Panc1 (cell line): ENCODE measurements at regions of chr2 and their contacts with region 1.

Region 1: DNA sequence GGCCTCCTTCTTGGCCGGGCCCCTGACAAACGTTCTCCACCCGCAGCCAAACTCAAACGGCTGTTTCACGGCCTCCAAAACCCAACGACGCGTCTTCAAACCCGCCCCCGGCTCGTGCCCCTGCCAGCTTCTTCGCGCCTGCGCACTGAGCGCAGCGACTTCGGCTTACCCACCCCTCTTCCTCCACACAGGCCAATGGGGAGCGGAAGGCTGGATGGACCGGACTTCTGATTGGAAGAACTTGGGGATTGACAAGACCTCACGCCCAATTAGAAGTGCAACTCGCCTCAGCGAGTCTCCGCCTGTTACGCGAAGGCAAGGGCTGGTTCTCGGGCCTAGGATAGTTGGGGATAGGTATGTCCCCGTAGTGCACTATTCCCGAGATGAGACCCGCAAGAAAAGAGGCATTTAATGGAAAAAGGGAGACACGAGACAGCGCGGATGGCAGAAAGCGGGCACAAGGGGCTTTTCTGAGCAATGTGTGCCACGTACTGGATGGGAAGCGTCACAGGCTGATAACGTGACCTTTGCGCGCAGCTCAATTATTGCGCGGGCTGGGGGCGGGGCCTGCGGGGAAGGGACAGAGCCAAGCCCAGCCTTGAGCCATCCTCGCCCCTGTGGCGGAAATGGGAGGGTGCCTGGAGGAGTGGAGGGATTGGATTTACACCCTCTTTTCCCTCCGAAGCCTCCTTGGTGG is at the start of gene LAPTM4A:
- DNase-seq: peak; percentile 99
- ATAC-seq: peak; percentile 98
- H3K4me3 ChIP-seq: peak within 1 kb of the TSS; percentile 98
- H3K27ac ChIP-seq: peak within 1 kb of the TSS; percentile 99
- H3K4me1 ChIP-seq: peaks cover 23% of the 10 kb centered on the region
- H3K27me3 ChIP-seq: 0 out of 2 replicates have a peak, but pooled peaks cover 3% of the 10 kb centered on the region
- CTCF ChIP-seq: no peak
- total RNA-seq, gene LAPTM4A: 123 TPM

Region 2: GRCh38 chr2:20037660-20038059 is 14.0 kb before region 1 on chr2:
- CTCF ChIA-PET with region 1: interaction called, 6 read pairs
- POLR2A ChIA-PET with region 1: interaction called, 11 read pairs
- in situ Hi-C with region 1: no loop called
- intact Hi-C with region 1: no loop called
- DNase-seq: no peak
- ATAC-seq: no peak
- H3K4me3 ChIP-seq: no peak overlapping the region
- H3K27ac ChIP-seq: no peak overlapping the region
- H3K4me1 ChIP-seq: no peaks in the 10 kb centered on the region; the same call in 1 of the 2 replicates
- H3K27me3 ChIP-seq: no peaks in the 10 kb centered on the region
- CTCF ChIP-seq: no peak